ENCODE measurements at regions of chr10 and their contacts with region 1.

Region 1: GRCh38 chr10:99435986-99436638 is 5.7 kb upstream of the GOT1 start:
- DNase-seq: peak; percentile 23
- H3K4me3 ChIP-seq: no peak overlapping the region
- H3K27ac ChIP-seq: no peak overlapping the region
- H3K27me3 ChIP-seq: no peaks in the 10 kb centered on the region
- CTCF ChIP-seq: peak; percentile 48

Region 2: GRCh38 chr10:99418910-99419624 is 17.0 kb before region 1 on chr10:
- CTCF ChIA-PET with region 1: interaction called, 12 read pairs
- POLR2A ChIA-PET with region 1: no interaction called
- DNase-seq: no peak
- H3K4me3 ChIP-seq: no peak overlapping the region
- H3K27ac ChIP-seq: no peak overlapping the region
- H3K27me3 ChIP-seq: no peaks in the 10 kb centered on the region
- CTCF ChIP-seq: no peak

Region 3: GRCh38 chr10:99450624-99451498 is 14.7 kb after region 1 on chr10:
- CTCF ChIA-PET with region 1: interaction called, 76 read pairs
- POLR2A ChIA-PET with region 1: no interaction called
- DNase-seq: no peak
- H3K4me3 ChIP-seq: no peak overlapping the region
- H3K27ac ChIP-seq: no peak overlapping the region
- H3K27me3 ChIP-seq: peaks cover 46% of the 10 kb centered on the region
- CTCF ChIP-seq: no peak

Region 4: GRCh38 chr10:99484603-99485581 is 48.8 kb after region 1 on chr10:
- CTCF ChIA-PET with region 1: interaction called, 16 read pairs
- POLR2A ChIA-PET with region 1: no interaction called
- DNase-seq: no peak
- H3K4me3 ChIP-seq: no peak overlapping the region
- H3K27ac ChIP-seq: no peak overlapping the region
- H3K27me3 ChIP-seq: peaks cover 4% of the 10 kb centered on the region
- CTCF ChIP-seq: no peak

Region 5: DNA sequence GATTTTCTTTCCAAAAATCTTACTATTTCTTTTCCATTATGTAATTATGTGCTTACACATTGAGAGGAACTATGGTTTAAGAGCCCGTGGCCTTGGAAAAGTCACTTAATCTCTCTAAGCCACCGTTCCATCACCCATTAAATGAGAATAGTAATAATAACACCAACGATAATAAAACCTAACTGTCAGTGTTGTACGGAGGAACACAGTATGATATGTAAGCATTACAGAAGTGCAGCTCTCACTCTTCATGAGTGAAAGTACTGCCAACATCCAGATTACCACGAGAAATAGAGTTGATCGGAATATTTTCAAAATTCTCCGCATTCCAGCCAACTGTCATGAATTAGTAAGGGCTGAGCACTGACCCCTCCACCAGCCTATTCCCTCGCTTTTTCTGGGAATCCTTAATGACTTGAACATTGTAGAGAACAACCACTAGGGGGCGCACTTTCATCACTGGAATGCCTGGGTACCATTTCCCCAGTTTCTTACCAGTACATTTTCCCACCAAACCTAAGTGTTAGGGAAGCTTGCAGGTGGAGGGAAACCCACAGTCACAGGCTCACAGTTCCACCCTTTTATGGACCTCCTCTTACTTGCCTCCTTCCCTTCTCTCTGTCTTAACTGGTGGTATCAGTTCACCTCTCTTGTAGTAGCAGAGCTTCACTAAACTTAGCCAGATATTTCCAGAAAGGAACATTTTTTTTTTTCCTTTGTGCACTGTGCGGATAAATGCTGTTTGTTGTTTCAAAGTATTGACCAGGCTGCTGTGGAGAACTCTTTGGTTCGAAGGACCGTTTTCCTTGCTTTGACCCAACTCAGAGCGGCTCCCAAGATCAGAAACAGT is 124.4 kb after region 1 on chr10:
- CTCF ChIA-PET with region 1: interaction called, 36 read pairs
- POLR2A ChIA-PET with region 1: no interaction called
- DNase-seq: no peak
- H3K4me3 ChIP-seq: no peak overlapping the region
- H3K27ac ChIP-seq: no peak overlapping the region
- H3K27me3 ChIP-seq: peaks cover 11% of the 10 kb centered on the region
- CTCF ChIP-seq: peak; percentile 69

Region 6: DNA sequence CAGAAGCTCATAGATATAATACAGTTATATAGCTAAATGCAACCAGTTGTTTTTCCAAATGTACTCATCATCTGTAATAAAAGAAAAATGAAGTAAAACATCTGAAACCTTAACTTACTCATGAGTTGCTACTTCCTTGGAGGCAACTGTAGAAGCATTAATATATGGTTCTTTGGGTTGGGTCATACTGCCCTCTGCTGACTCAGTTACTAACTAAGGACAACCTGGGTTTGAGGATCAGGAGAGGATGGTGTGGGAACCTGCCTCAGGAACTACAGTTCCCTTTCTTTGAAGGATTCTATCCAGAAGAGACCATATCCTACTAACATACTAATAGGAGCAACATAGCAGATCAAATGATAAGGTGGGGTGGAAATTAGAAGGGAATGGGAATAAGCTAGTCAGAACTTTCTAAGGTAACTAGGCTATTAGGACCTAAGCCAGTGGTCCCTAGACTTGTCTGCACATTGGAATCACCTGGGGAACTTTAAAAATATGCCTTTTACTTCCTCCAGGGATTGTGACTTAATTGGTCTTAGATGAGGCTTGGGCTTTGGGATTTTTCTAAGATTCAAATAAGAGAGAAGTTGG is 275.1 kb after region 1 on chr10:
- CTCF ChIA-PET with region 1: interaction called, 41 read pairs
- POLR2A ChIA-PET with region 1: no interaction called
- DNase-seq: peak; percentile 55
- H3K4me3 ChIP-seq: no peak overlapping the region
- H3K27ac ChIP-seq: no peak overlapping the region
- H3K27me3 ChIP-seq: no peaks in the 10 kb centered on the region
- CTCF ChIP-seq: peak; percentile 69